Heart left ventricle (tissue), 16 donors: ENCODE measurements at regions of chr11 and their contacts with region 1.

Region 1: DNA sequence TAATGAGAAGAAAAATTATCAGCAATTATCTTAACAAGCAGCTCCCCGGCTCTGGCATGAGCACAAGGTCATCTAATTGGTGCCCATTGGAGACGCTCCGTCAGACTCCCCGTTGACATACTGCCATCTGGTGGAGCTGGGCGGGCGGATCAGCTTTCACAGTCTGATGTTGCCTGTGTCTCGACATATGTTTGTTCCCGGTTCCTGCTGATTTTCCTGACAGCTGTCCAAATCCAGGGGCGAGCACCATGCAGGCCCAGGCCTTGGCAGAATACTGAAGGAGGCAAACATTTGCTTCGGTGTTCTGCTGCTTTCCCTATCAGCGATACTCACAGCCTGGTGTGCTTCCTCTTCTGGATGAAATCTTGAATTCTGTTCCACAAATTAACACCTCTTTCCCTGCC is 43.8 kb upstream of the BARX2 start:
- DNase-seq: peak; percentile 72 to 85 (median 80)
- ATAC-seq: peak; percentile 61 to 98 (median 90)
- H3K4me3 ChIP-seq: no peak overlapping the region
- H3K27ac ChIP-seq: no peak overlapping the region
- H3K4me1 ChIP-seq: peaks cover 0 to 4% (median 0%) of the 10 kb centered on the region in 12 donors
- H3K27me3 ChIP-seq: no peaks in the 10 kb centered on the region
- CTCF ChIP-seq: peak; percentile 67 to 94 (median 87)
- POLR2A ChIP-seq: no peak

Region 2: DNA sequence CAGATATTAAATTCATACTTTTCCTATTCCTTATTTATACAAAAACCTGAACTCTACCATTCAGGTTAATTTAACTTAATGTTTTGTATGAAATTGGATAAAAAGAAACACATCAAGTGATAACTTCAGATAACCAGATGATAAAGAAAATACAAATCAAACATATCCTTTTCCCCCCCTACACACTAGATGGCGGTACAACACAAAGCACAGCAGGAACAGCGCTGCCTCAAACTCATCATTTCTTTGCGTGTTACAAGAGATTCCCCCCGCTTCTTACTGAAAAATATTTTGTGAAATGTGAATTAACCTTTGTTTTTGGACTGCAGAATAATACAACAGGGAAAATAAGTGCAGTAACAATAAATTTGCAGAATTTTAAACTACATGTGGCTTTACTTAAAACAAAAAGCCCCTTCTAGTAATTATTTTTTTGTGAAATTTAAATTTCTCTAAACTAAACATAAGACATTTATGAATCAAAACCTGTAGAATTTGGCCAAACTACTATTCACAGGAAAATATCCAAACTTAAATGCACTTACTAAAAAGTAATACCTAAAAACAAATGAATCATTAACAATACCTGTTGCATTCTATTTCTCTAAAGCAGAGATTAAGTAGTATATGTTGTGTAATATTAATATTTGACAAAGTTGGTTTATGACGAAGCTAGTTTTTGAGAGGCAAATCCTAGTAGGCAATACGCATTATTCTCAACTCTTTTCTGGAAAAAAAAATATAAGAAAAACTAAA is 214.1 kb before region 1 on chr11:
- intact Hi-C with region 1: loop called (anchors 1 to 2 kb)
- DNase-seq: peak in 1 of 5 donors; percentile 27
- ATAC-seq: peak in 2 of 4 donors; percentile 59 to 61
- H3K4me3 ChIP-seq: no peak overlapping the region
- H3K27ac ChIP-seq: no peak overlapping the region
- H3K4me1 ChIP-seq: peaks cover 0 to 3% (median 0%) of the 10 kb centered on the region in 12 donors
- H3K27me3 ChIP-seq: no peaks in the 10 kb centered on the region
- CTCF ChIP-seq: peak; percentile 79 to 94 (median 86)
- POLR2A ChIP-seq: no peak

Region 3: GRCh38 chr11:129223701-129224149 is 108.1 kb before region 1 on chr11:
- intact Hi-C with region 1: loop called in 2 of 10 experiments (anchors 5 to 10 kb)
- DNase-seq: no peak
- ATAC-seq: peak in 2 of 4 donors; percentile 36 to 86
- H3K4me3 ChIP-seq: no peak overlapping the region
- H3K27ac ChIP-seq: peak overlapping the region in 1 of 12 donors; percentile 43
- H3K4me1 ChIP-seq: peaks cover 0 to 7% (median 0%) of the 10 kb centered on the region in 12 donors
- H3K27me3 ChIP-seq: no peaks in the 10 kb centered on the region
- CTCF ChIP-seq: no peak
- POLR2A ChIP-seq: no peak

Region 4: DNA sequence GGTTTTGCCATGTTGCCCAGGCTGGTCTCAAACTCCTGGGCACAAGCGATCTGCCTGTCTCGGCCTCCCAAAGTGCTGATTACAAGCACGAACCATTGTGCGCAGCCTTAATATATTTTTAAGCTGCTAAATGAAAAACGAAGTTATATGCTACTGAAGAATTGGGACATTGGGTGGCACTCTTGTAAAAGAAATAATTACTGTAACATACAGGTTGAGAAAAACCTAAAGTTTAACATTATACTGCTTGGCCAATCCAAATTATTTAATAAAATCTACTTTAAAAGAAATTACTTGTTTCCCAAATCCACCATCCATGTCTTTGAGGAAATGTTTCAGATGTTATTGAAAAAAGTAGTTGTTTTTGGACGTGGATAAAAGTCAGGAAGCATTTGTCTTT is 101.9 kb before region 1 on chr11:
- intact Hi-C with region 1: loop called in 5 of 10 experiments (anchors 2 to 10 kb)
- DNase-seq: no peak
- ATAC-seq: no peak
- H3K4me3 ChIP-seq: no peak overlapping the region
- H3K27ac ChIP-seq: no peak overlapping the region
- H3K4me1 ChIP-seq: no peaks in the 10 kb centered on the region
- H3K27me3 ChIP-seq: no peaks in the 10 kb centered on the region
- CTCF ChIP-seq: peak in 8 of 12 donors; percentile 4 to 30 (median 18)
- POLR2A ChIP-seq: no peak

Region 5: DNA sequence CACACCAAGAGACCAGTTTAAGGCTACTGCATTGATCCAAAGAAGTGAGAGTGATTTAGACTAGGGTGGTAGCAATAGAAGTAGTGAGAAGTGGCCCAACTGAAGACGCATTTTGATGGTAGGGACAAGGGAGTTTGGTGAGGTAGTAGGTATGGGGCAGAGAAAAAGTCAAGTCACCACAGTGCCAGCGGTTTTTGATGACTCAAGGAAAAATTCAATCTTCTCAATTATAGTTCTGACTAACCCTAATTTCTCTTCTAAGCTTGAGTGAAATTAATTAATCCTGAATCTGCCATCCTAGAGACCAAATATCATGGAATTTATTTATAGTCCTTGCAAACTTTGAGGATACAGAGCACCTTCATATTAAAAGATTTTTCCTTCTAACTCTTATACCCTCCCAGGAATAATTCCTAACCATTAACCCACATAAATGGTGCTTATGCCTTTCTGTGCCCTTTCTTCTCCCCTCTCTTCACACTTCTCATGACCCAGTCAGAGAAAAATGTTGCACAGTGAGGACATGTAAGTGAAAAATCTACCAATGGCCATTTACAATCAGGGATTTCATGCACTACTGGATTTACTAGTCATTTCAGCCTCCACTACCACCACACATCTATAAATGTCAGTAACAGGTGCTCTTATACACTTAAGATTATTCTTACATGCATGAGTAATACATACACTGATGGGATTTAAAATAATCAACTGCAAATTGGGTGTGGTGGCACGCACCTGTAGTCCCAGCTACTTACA is 93.8 kb before region 1 on chr11:
- intact Hi-C with region 1: loop called in 2 of 10 experiments (anchors 5 kb)
- DNase-seq: no peak
- ATAC-seq: no peak
- H3K4me3 ChIP-seq: no peak overlapping the region
- H3K27ac ChIP-seq: no peak overlapping the region
- H3K4me1 ChIP-seq: no peaks in the 10 kb centered on the region
- H3K27me3 ChIP-seq: no peaks in the 10 kb centered on the region
- CTCF ChIP-seq: no peak
- POLR2A ChIP-seq: no peak